A673 (cell line): ENCODE measurements at regions of chr1 and their contacts with region 1.

Region 1: DNA sequence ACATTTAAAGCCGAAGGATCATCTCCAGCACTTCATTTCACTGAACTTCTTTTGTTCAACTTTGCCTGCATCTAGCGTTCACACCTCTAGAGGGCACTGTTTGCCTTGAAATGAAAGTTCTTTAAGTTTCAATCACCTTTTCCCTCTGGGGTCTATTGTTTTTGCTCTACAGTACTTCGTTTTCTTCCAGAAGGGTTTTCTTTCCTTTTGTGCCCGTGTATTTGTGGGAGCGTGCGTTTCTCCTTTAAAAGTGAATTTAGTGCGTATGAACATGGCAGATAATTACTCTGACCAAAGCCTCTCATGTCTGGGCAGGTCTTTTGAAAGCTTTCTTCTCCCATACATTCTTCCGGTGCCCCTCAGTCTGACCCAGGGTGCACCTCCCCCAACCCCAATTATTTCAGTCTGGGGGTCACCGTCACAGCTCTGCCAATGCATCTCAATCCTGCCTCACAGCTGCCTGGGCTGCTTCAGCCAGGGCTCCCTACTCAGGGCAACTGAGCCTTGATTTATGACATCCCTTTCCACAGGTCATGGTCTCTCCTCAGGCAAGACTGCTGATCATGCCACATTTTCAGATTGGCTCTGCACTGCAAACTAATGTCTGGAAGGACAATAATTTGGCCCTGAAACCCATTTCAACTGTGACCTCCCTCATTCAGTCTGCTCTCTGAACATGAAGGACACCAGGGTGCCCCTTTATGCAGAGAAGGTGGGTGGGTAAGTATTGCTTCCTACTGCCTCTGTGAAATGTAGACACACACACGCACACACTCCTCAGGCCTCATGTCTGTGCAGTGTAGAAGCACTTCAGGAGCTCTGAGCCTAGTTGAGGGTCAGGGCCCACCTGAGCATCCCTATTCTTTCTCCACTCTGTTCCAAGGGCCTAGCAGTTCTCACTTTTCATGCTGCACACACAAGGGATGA is 88.6 kb downstream of the NUF2 start:
- DNase-seq: peak; percentile 91
- H3K4me3 ChIP-seq: peak overlapping the region; percentile 2
- H3K27ac ChIP-seq: peak overlapping the region; percentile 2
- H3K4me1 ChIP-seq: peaks cover 28% of the 10 kb centered on the region
- H3K27me3 ChIP-seq: no peaks in the 10 kb centered on the region
- CTCF ChIP-seq: peak; percentile 92

Region 2: DNA sequence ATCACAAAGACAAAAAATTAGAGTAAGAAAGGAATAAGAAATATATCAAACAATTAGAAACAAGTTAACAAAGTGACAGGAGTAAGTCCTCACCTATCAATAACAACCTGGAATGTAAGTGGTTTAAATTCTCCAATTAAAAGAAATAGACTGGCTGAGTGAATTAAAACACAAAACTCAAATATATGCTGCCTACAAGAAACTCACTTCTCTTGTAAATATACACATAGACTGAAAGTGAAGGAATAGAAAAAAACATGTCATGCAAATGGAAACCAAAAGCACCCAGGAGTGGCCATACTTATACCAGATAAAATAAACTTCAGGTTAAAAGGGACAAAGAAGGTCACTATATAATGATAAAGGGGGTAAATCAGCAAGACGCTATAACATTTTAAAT is 131.7 kb before region 1 on chr1:
- CTCF ChIA-PET with region 1: no interaction called
- POLR2A ChIA-PET with region 1: no interaction called
- intact Hi-C with region 1: no loop called
- DNase-seq: no peak
- H3K4me3 ChIP-seq: no peak overlapping the region
- H3K27ac ChIP-seq: no peak overlapping the region
- H3K4me1 ChIP-seq: no peaks in the 10 kb centered on the region
- H3K27me3 ChIP-seq: no peaks in the 10 kb centered on the region
- CTCF ChIP-seq: no peak

Region 3: GRCh38 chr1:163367721-163368120 is 42.6 kb before region 1 on chr1:
- CTCF ChIA-PET with region 1: no interaction called
- POLR2A ChIA-PET with region 1: no interaction called
- intact Hi-C with region 1: no loop called
- DNase-seq: no peak
- H3K4me3 ChIP-seq: no peak overlapping the region
- H3K27ac ChIP-seq: no peak overlapping the region
- H3K4me1 ChIP-seq: peaks cover 6% of the 10 kb centered on the region
- H3K27me3 ChIP-seq: no peaks in the 10 kb centered on the region
- CTCF ChIP-seq: no peak

Region 4: DNA sequence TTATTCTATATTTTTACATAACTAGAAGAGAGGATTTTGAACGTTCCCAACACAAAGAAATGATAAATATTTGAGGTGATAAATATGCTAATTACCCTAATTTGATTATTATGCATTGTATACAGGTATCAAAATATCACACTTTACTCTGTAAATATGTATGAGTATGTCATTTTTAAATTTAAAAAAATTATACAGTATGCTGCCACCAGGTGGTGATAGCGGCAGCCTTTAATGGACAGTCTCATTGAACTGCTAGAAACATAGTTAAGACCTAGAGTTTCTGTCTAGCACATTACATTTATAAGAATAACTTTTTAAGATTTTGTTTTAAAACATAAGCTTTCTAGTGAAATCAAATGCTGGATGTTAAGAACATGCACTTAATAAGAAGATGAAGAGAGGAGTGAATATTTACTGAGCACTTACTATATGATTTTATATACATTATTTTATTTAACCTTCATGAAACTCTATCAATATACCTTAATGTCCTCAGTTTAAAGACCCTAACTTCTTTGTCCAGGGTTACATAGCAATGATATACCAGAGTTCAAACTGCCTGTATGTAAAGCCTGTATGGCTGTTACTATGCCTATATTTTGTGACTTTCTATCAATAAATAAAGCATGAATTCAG is 118.5 kb after region 1 on chr1:
- CTCF ChIA-PET with region 1: no interaction called
- POLR2A ChIA-PET with region 1: no interaction called
- intact Hi-C with region 1: loop called (anchors 5 kb)
- DNase-seq: peak; percentile 71
- H3K4me3 ChIP-seq: no peak overlapping the region
- H3K27ac ChIP-seq: peak overlapping the region; percentile 25
- H3K4me1 ChIP-seq: peaks cover 19% of the 10 kb centered on the region
- H3K27me3 ChIP-seq: no peaks in the 10 kb centered on the region
- CTCF ChIP-seq: peak; percentile 77

Region 5: GRCh38 chr1:163583661-163584181 is 173.4 kb after region 1 on chr1:
- CTCF ChIA-PET with region 1: no interaction called
- POLR2A ChIA-PET with region 1: no interaction called
- intact Hi-C with region 1: loop called (anchors 5 kb)
- DNase-seq: peak; percentile 59
- H3K4me3 ChIP-seq: no peak overlapping the region
- H3K27ac ChIP-seq: peak overlapping the region; percentile 98
- H3K4me1 ChIP-seq: peaks cover 54% of the 10 kb centered on the region
- H3K27me3 ChIP-seq: no peaks in the 10 kb centered on the region
- CTCF ChIP-seq: no peak

Region 6: GRCh38 chr1:165073185-165074007 is 1663.1 kb after region 1 on chr1:
- CTCF ChIA-PET with region 1: interaction called, 3 read pairs
- POLR2A ChIA-PET with region 1: no interaction called
- intact Hi-C with region 1: loop called (anchors 2 kb)
- DNase-seq: peak; percentile 75
- H3K4me3 ChIP-seq: no peak overlapping the region
- H3K27ac ChIP-seq: no peak overlapping the region
- H3K4me1 ChIP-seq: no peaks in the 10 kb centered on the region
- H3K27me3 ChIP-seq: no peaks in the 10 kb centered on the region
- CTCF ChIP-seq: peak; percentile 74